ENCODE measurements at regions of chr12 and their contacts with region 1.

Region 1: DNA sequence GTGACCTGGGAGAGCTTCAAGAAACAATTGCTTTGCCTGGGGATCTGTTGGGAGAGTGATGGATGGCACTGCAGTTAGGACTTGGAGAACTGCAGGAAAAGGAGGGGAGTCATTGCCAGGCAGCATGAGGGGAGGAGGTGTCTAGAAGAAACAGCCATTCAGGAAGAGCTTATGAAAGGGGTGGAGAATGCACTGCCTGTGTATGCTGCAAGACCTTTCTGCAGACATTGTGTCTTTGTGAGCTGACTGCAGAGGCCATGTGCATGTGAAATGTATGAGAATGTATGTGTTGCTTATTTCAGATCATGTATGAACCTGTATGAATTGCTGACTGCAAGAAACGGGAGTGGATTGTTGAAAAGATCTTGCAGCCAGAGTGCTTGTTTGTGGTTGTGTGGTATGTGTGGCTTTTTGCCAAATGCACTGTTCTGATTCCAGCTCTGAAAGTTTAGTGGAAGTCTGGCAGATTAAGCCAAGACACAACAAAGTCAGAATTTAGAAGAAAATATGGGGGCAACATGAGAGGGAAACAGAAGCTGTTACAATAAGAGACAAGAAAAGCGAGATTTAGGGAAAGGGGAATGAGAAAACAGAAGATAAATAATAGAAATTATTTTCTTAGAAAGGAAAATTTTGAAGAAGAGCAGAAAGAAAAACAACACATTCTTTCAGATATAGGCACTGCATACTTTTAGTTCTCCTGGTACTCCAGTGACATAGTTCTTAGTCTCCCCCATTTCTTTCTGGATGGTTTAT is 9.8 kb upstream of the RIMKLB start:
- DNase-seq: peak; percentile 32 to 89
- H3K4me3 ChIP-seq: peak overlapping the region in 1 of 2 donors; percentile 29
- H3K27ac ChIP-seq: peak overlapping the region; percentile 67 to 84
- H3K4me1 ChIP-seq: peaks cover 0 to 25% of the 10 kb centered on the region in 2 donors
- H3K27me3 ChIP-seq: no peaks in the 10 kb centered on the region
- CTCF ChIP-seq: no peak

Region 2: DNA sequence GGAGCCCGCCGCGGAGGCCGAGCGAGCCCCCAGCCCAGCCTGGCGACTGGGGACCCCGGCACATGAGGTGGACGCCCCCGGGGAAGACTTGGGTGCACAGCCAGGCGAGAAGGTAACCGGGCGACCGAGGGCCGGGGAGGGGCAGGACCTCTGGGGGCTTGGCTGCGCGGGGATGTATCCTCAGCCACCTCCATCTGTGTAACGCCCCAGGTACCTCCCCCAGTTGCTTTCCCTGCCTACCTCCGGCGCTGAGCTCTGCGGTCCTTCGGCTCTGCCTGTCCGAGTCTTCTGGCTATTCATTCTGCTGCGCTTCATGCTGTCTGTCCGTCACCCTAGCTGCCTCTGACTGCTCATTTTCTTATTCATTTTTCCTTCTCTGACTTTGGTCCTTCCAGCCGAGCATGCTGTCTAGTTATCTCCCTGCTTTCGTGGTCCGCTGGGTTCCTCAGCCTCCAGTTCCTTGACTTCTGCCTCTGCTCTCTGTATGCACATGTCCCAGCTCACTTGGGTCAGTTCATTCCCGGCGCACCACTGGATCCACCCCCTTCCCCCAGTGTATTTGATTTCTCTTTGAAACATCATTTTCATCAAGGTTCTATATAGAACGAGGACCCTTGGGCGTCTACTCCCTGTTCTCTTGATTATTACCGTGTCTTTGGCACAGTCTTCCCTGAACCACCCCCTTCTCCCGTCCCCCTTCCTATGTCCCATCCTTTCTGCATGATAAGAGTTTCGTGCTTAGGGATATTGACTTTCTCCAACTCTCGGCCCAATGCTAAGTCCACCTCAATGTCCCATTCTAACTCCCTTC is 226.9 kb after region 1 on chr12:
- intact Hi-C with region 1: loop called (anchors 5 kb)
- DNase-seq: peak in 1 of 2 donors; percentile 68
- H3K4me3 ChIP-seq: peak overlapping the region; percentile 64
- H3K27ac ChIP-seq: peak overlapping the region; percentile 91 to 95
- H3K4me1 ChIP-seq: peaks cover 0 to 17% of the 10 kb centered on the region in 2 donors
- H3K27me3 ChIP-seq: no peaks in the 10 kb centered on the region
- CTCF ChIP-seq: no peak